Panc1 (cell line): ENCODE measurements at regions of chr3 and their contacts with region 1.

Region 1: DNA sequence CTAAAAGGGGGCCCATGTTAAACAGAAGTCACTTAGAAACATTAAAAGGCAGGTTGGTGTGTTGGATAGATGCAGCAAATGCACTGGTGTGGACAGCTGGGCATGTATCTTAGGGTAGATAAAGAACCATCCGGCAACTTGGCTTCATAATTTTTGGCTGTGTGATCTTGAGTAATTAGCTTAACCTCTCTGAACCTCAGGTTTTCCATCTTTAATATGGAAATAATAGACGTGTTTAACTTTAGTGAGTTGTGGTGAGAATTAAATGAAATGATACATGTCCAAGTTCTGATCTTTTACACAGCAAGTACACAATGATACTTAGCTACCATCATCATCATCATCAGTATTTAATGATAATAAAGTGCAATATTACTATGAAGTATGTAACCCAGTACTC is 330.4 kb downstream of the FOXP1 start:
- DNase-seq: no peak
- ATAC-seq: no peak
- H3K4me3 ChIP-seq: no peak overlapping the region
- H3K27ac ChIP-seq: no peak overlapping the region
- H3K4me1 ChIP-seq: no peaks in the 10 kb centered on the region
- H3K27me3 ChIP-seq: no peaks in the 10 kb centered on the region
- CTCF ChIP-seq: no peak

Region 2: DNA sequence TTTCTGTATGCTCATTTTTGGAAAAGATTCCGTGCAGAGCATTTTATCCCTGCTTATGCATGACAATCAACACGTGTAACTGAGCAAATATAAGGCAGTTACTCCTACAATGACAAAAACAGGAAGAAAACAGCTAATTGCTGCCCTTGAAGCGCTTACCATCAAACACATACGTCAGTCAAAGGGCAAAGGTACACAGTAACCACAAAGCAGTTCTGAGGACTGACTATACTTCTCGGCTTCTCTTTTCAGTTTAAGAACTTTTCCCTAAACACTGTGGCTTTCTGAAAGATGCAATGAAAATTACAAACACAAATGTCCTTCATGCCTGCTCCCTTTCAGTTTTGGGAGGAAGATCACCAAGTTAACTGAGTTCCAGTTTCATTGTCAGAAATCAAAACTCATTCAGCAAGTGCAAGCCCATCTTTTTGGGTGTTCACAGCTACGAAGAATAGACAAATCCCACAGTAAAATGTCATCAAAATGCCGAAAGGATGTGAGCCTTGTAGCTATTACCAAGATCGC is 272.5 kb before region 1 on chr3:
- CTCF ChIA-PET with region 1: interaction called, 18 read pairs
- POLR2A ChIA-PET with region 1: no interaction called
- in situ Hi-C with region 1: no loop called
- intact Hi-C with region 1: no loop called
- DNase-seq: no peak
- ATAC-seq: no peak
- H3K4me3 ChIP-seq: no peak overlapping the region
- H3K27ac ChIP-seq: no peak overlapping the region
- H3K4me1 ChIP-seq: no peaks in the 10 kb centered on the region; the same call in 1 of the 2 replicates
- H3K27me3 ChIP-seq: no peaks in the 10 kb centered on the region
- CTCF ChIP-seq: no peak

Region 3: GRCh38 chr3:71109241-71109976 is 143.8 kb before region 1 on chr3:
- CTCF ChIA-PET with region 1: no interaction called
- POLR2A ChIA-PET with region 1: no interaction called
- in situ Hi-C with region 1: no loop called
- intact Hi-C with region 1: no loop called
- DNase-seq: peak; percentile 42
- ATAC-seq: no peak
- H3K4me3 ChIP-seq: no peak overlapping the region
- H3K27ac ChIP-seq: no peak overlapping the region
- H3K4me1 ChIP-seq: no peaks in the 10 kb centered on the region
- H3K27me3 ChIP-seq: no peaks in the 10 kb centered on the region
- CTCF ChIP-seq: no peak

Region 4: DNA sequence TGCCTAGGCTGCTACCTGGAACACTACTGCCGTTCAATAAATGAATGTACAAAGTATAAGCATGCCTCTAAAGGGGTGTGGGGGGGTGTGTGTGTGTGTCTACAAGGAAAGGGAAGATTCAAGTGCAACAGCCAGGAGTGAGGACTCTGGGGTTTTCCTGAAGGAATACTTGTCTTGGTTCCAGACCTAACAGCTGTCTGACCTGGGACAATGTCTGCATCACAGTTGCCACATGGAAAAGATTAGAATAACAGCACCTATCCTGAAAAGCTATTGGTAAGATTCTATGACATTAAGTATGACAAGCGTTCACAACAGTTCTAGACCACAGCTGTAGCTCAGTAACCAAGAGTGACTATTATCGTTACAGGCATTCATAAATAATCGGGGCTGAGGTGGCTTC is 14.8 kb before region 1 on chr3:
- CTCF ChIA-PET with region 1: no interaction called
- POLR2A ChIA-PET with region 1: no interaction called
- in situ Hi-C with region 1: no loop called
- intact Hi-C with region 1: no loop called
- DNase-seq: no peak
- ATAC-seq: no peak
- H3K4me3 ChIP-seq: no peak overlapping the region
- H3K27ac ChIP-seq: no peak overlapping the region
- H3K4me1 ChIP-seq: no peaks in the 10 kb centered on the region
- H3K27me3 ChIP-seq: no peaks in the 10 kb centered on the region
- CTCF ChIP-seq: no peak